Activated CD4-positive, alpha-beta T cell treated with anti-CD3 and anti-CD28 coated beads, Interleukin-2, amount 10 ng/mL, durations not matched to agents 24 days and 14 days (primary cell): ENCODE measurements at regions of chr10 and their contacts with region 1.

Region 1: GRCh38 chr10:4034907-4035598 is 250.0 kb upstream of the KLF6 start:
- DNase-seq: peak; percentile 83
- H3K4me3 Mint-ChIP-seq: peak overlapping the region; percentile 73
- H3K27ac Mint-ChIP-seq: peak overlapping the region; percentile 84
- H3K4me1 Mint-ChIP-seq: peaks cover 36% of the 10 kb centered on the region
- H3K27me3 Mint-ChIP-seq: no peaks in the 10 kb centered on the region

Region 2: GRCh38 chr10:3811291-3811870 is 223.7 kb before region 1 on chr10:
- intact Hi-C with region 1: loop called (anchors 2 kb)
- DNase-seq: peak; percentile 90
- H3K4me3 Mint-ChIP-seq: peak overlapping the region; percentile 68
- H3K27ac Mint-ChIP-seq: no peak overlapping the region
- H3K4me1 Mint-ChIP-seq: peaks cover 71% of the 10 kb centered on the region
- H3K27me3 Mint-ChIP-seq: no peaks in the 10 kb centered on the region

Region 3: GRCh38 chr10:3948843-3949242 is 86.2 kb before region 1 on chr10:
- intact Hi-C with region 1: loop called (anchors 5 kb)
- DNase-seq: peak; percentile 92
- H3K4me3 Mint-ChIP-seq: peak overlapping the region; percentile 50
- H3K27ac Mint-ChIP-seq: peak overlapping the region; percentile 90
- H3K4me1 Mint-ChIP-seq: peaks cover 49% of the 10 kb centered on the region
- H3K27me3 Mint-ChIP-seq: no peaks in the 10 kb centered on the region

Region 4: GRCh38 chr10:3980660-3981059 is 54.4 kb before region 1 on chr10:
- intact Hi-C with region 1: no loop called
- DNase-seq: no peak
- H3K4me3 Mint-ChIP-seq: peak overlapping the region; percentile 3
- H3K27ac Mint-ChIP-seq: no peak overlapping the region
- H3K4me1 Mint-ChIP-seq: peaks cover 38% of the 10 kb centered on the region
- H3K27me3 Mint-ChIP-seq: no peaks in the 10 kb centered on the region

Region 5: GRCh38 chr10:4013651-4014121 is 21.4 kb before region 1 on chr10:
- intact Hi-C with region 1: loop called (anchors 1 kb)
- DNase-seq: peak; percentile 72
- H3K4me3 Mint-ChIP-seq: no peak overlapping the region
- H3K27ac Mint-ChIP-seq: peak overlapping the region; percentile 62
- H3K4me1 Mint-ChIP-seq: peaks cover 14% of the 10 kb centered on the region
- H3K27me3 Mint-ChIP-seq: no peaks in the 10 kb centered on the region

Region 6: DNA sequence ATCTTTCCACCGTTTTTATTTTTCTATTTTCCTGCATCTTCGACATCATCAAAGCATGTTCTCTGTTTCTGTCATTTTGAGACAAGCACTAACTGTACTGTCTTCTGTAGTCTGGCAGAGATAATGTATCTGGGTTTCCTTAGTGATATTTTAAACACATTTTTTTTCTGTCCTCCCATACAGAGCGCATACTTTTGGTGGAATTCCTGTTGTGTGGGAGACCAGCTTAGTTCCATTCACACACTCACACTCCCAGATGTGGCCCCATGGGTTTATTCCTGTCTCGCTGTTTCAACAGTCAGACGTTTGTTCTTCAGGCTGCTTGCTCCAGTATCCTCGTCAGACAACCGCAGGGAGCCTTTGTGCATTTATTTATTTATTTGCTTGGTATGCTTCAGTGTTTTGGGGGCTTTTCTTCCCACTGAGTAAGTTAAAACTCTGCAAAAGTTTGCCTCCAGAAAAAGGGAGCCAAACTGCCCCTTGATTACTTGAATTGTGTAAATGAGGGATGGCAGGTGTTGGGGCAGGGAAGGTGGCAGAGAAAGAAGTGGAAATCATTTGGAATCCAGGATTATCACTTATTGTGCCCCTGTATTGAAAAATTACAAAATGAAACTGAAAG is 206.8 kb after region 1 on chr10:
- intact Hi-C with region 1: loop called (anchors 10 kb)
- DNase-seq: no peak
- H3K4me3 Mint-ChIP-seq: no peak overlapping the region
- H3K27ac Mint-ChIP-seq: no peak overlapping the region
- H3K4me1 Mint-ChIP-seq: peaks cover 38% of the 10 kb centered on the region
- H3K27me3 Mint-ChIP-seq: no peaks in the 10 kb centered on the region